ENCODE measurements at regions of chr17 and their contacts with region 1.

Region 1: DNA sequence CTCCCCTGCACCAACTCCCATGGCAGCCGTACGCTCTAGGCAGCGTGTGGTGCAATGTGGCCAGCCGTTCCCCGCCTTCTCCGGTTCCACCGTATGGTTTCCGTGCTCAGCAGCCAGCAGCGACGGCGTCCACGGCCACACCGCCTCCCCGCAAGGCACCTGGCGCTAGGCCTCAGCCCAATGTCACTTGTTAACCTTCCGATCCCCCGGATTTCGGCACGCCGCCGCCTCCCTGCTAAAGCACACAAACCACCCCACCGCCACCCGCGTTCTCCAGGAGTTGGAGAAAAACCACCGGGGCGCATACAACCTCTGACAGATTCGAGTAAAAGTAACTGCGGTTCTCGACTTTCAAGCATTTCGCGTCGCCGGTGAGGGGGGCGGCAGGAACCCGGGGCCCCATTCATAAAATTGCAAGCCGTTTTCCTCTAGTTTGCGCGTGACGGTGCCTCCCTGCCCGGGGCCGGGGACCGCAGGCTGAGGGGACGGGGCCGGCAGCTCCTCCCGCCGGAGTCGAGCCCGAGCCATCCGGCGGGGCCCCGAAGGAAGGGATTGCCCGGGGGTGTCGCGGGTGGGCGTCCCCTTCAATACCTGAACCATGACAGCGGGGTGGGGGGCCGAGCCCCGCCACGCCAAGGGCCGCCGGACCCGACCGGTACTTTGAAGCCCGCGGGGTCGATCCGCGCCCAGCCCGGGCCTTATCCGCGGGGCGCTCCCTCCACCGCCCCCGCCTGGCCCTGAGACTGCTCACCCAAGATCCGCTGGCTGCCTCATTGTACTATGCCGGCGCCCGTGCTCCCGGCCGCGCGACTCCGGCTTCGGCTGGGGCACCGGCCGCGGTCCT is at the start of gene TEX2:
- DNase-seq: peak; percentile 47 to 70
- ATAC-seq: peak; percentile 40 to 82 (median 66)
- H3K4me3 ChIP-seq: peak within 1 kb of the TSS; percentile 66 to 99 (median 98)
- H3K27ac ChIP-seq: peak within 1 kb of the TSS; percentile 47 to 97 (median 92)
- H3K4me1 ChIP-seq: peaks cover 6 to 51% (median 36%) of the 10 kb centered on the region in 9 donors
- H3K27me3 ChIP-seq: no peaks in the 10 kb centered on the region
- CTCF ChIP-seq: no peak
- total RNA-seq, gene TEX2: 44.2 to 60.5 (median 55.3) TPM

Region 2: GRCh38 chr17:64145757-64146417 is 116.8 kb before region 1 on chr17:
- intact Hi-C with region 1: loop called in 8 of 10 experiments (anchors 2 to 10 kb)
- DNase-seq: peak; percentile 94 to 98
- ATAC-seq: peak; percentile 95 to 97 (median 96)
- H3K4me3 ChIP-seq: peak overlapping the region; percentile 64 to 94 (median 76)
- H3K27ac ChIP-seq: peak overlapping the region; percentile 85 to 99 (median 96)
- H3K4me1 ChIP-seq: peaks cover 6 to 45% (median 38%) of the 10 kb centered on the region in 9 donors
- H3K27me3 ChIP-seq: no peaks in the 10 kb centered on the region
- CTCF ChIP-seq: peak in 2 of 9 donors; percentile 9 to 28

Region 3: GRCh38 chr17:64155751-64156544 is 106.7 kb before region 1 on chr17:
- intact Hi-C with region 1: loop called in 5 of 10 experiments (anchors 2 to 10 kb)
- DNase-seq: peak; percentile 73 to 85
- ATAC-seq: peak; percentile 87 to 95 (median 90)
- H3K4me3 ChIP-seq: peak overlapping the region in 1 of 10 donors; percentile 2
- H3K27ac ChIP-seq: peak overlapping the region; percentile 86 to 96 (median 92)
- H3K4me1 ChIP-seq: peaks cover 39 to 88% (median 82%) of the 10 kb centered on the region in 9 donors
- H3K27me3 ChIP-seq: no peaks in the 10 kb centered on the region
- CTCF ChIP-seq: peak in 3 of 9 donors; percentile 24 to 37 (median 26)

Region 4: DNA sequence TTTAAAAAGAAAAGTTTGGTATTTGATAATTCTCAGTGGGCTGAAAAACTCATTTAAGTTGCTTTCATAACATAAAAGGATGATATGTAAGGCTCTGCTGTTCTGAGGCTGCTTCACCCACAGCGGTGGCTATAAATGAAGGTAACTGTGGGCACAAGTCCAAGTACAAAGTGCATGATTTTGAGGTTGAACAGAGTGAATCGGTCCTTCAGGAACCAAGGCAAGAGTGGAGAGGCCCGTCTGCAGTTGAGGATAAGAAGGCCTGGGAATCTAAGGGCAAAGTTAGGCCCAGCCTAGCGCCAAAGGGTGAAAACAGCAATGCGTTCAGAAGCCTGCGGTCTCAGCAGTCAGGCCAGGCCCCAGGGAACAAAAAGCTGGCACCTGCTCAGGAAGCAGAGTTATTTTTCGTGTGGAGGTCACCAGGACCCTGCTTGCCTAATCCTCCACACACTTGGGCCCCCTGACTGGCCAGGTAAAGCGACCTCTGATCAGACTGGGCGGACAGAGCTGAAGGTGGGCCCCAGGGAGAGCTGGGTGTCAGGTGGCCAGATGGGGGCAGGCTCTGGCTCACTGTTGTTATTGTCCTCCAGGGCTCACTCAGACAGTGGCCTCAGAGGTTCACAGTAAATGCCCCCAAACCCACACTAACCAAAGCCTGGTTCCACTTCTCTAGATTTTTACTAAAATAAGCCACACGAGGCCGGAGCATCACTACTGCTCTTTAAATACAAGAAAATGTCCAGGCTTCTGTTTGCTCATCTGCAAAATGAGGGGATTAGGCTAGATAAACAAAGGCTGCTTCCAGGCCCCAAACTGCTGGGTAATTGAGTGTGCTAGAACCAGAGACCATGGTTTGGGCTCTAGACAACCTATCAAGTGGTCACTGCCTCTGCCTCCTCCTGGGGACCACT is 46.0 kb before region 1 on chr17:
- intact Hi-C with region 1: loop called in 3 of 10 experiments (anchors 5 to 10 kb)
- DNase-seq: peak; percentile 48 to 50
- ATAC-seq: peak; percentile 48 to 79 (median 72)
- H3K4me3 ChIP-seq: no peak overlapping the region
- H3K27ac ChIP-seq: peak overlapping the region; percentile 25 to 89 (median 78)
- H3K4me1 ChIP-seq: peaks cover 23 to 58% (median 50%) of the 10 kb centered on the region in 9 donors
- H3K27me3 ChIP-seq: no peaks in the 10 kb centered on the region
- CTCF ChIP-seq: peak in 6 of 9 donors; percentile 5 to 39 (median 21)